ENCODE measurements at regions of chr2 and their contacts with region 1.

Region 1: GRCh38 chr2:157857881-157858280 is 18.2 kb downstream of the ACVR1 start:
- DNase-seq: no peak
- H3K4me3 Mint-ChIP-seq: no peak overlapping the region
- H3K27ac Mint-ChIP-seq: no peak overlapping the region
- H3K4me1 Mint-ChIP-seq: peaks cover 45% of the 10 kb centered on the region
- H3K27me3 Mint-ChIP-seq: no peaks in the 10 kb centered on the region

Region 2: GRCh38 chr2:157838442-157839161 is 19.3 kb before region 1 on chr2:
- CTCF ChIA-PET with region 1: no interaction called
- POLR2A ChIA-PET with region 1: interaction called, 3 read pairs
- intact Hi-C with region 1: loop called (anchors 2 kb)
- DNase-seq: peak; percentile 34
- H3K4me3 Mint-ChIP-seq: no peak overlapping the region
- H3K27ac Mint-ChIP-seq: peak overlapping the region; percentile 14
- H3K4me1 Mint-ChIP-seq: peaks cover 44% of the 10 kb centered on the region
- H3K27me3 Mint-ChIP-seq: no peaks in the 10 kb centered on the region

Region 3: DNA sequence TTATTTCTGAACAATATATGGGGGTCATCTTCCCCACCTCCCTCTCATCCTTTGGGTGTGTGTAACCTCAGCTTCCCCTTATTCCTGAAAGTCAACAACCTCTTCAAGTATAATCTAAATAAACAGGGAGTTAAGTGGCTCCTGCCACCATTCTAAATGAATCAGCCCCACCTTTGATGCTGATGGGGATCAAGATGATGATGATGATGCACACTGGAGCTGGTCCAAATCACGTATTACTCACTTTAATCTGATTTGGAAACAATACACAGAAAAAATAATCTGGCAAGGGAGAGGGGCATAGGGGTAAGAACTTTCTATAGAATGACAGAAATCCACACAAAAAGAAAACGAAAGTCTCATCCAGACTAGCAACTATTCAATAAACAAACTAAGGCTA is 11.1 kb after region 1 on chr2:
- CTCF ChIA-PET with region 1: no interaction called
- POLR2A ChIA-PET with region 1: interaction called, 6 read pairs
- intact Hi-C with region 1: loop called (anchors 1 kb)
- DNase-seq: peak; percentile 35
- H3K4me3 Mint-ChIP-seq: no peak overlapping the region
- H3K27ac Mint-ChIP-seq: peak overlapping the region; percentile 6
- H3K4me1 Mint-ChIP-seq: peaks cover 89% of the 10 kb centered on the region
- H3K27me3 Mint-ChIP-seq: no peaks in the 10 kb centered on the region

Region 4: GRCh38 chr2:157989227-157989626 is 131.3 kb after region 1 on chr2:
- CTCF ChIA-PET with region 1: no interaction called
- POLR2A ChIA-PET with region 1: no interaction called
- intact Hi-C with region 1: no loop called
- DNase-seq: no peak
- H3K4me3 Mint-ChIP-seq: no peak overlapping the region
- H3K27ac Mint-ChIP-seq: no peak overlapping the region
- H3K4me1 Mint-ChIP-seq: no peaks in the 10 kb centered on the region
- H3K27me3 Mint-ChIP-seq: peaks cover under 1% of the 10 kb centered on the region

Measured in activated CD4-positive, alpha-beta memory T cell treated with anti-CD3 and anti-CD28 coated beads for 36 hours (primary cell).